Vagina (tissue), 2 donors: ENCODE measurements at regions of chr12 and their contacts with region 1.

Region 1: DNA sequence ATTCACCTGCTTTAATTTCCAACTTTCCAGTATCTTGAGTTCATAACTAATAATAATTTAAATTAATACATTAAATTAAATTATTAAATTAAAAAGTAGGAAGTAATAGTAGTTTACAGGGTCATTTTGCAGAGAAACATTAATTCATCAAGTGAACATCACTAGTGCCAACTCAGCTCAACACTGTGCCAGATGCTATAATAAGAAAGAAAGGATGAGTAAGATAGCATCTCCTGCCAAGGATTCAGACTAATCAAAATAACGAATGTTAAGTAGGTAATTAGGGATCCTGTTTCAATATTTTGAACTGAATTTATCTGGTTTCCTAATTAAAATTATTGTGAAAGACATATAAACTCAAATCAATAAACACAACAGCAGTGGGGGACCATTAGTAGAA is 596.7 kb downstream of the SLC6A15 start:
- DNase-seq: no peak
- H3K4me3 ChIP-seq: no peak overlapping the region
- H3K27ac ChIP-seq: no peak overlapping the region
- H3K4me1 ChIP-seq: no peaks in the 10 kb centered on the region
- H3K27me3 ChIP-seq: no peaks in the 10 kb centered on the region
- CTCF ChIP-seq: no peak
- POLR2A ChIP-seq: no peak

Region 2: DNA sequence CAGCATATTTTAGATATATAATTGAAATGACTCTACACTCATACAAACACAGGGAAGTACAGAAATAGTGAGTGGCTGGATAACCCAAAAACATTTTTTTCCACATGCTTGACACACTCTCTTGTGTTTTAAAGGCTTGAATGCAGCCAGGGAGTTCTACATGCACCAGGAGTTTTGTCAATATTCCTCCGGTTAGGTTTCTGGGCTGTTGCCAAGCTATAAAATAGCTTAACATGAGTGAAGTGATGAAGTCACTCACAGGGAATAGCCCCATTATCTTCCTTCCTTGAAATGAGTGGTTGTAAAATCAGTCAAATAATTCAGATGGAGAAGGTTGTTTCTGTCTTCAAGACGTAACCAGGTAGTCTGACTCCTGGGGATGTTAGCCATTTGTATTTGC is 14.0 kb after region 1 on chr12:
- intact Hi-C with region 1: no loop called
- DNase-seq: no peak
- H3K4me3 ChIP-seq: no peak overlapping the region
- H3K27ac ChIP-seq: no peak overlapping the region
- H3K4me1 ChIP-seq: no peaks in the 10 kb centered on the region
- H3K27me3 ChIP-seq: no peaks in the 10 kb centered on the region
- CTCF ChIP-seq: no peak
- POLR2A ChIP-seq: no peak

Region 3: GRCh38 chr12:84599539-84599938 is 283.6 kb after region 1 on chr12:
- intact Hi-C with region 1: no loop called
- DNase-seq: no peak
- H3K4me3 ChIP-seq: no peak overlapping the region
- H3K27ac ChIP-seq: no peak overlapping the region
- H3K4me1 ChIP-seq: no peaks in the 10 kb centered on the region
- H3K27me3 ChIP-seq: no peaks in the 10 kb centered on the region
- CTCF ChIP-seq: no peak
- POLR2A ChIP-seq: no peak

Region 4: GRCh38 chr12:86290615-86291014 is 1974.7 kb after region 1 on chr12:
- intact Hi-C with region 1: loop called (anchors 5 kb)
- DNase-seq: no peak
- H3K4me3 ChIP-seq: no peak overlapping the region
- H3K27ac ChIP-seq: no peak overlapping the region
- H3K4me1 ChIP-seq: no peaks in the 10 kb centered on the region
- H3K27me3 ChIP-seq: no peaks in the 10 kb centered on the region
- CTCF ChIP-seq: no peak
- POLR2A ChIP-seq: no peak